Activated CD8-positive, alpha-beta T cell treated with anti-CD3 and anti-CD28 coated beads, Interleukin-2, amount 10 ng/mL, durations not matched to agents 7 days and 5 days (primary cell): ENCODE measurements at regions of chr6 and their contacts with region 1.

Region 1: GRCh38 chr6:42879372-42880239 is at the start of gene RPL7L1:
- DNase-seq: peak; percentile 90
- ATAC-seq: peak; percentile 96
- H3K4me3 Mint-ChIP-seq: peak within 1 kb of the TSS; percentile 100
- H3K27ac Mint-ChIP-seq: peak within 1 kb of the TSS; percentile 100
- H3K4me1 Mint-ChIP-seq: peaks cover 25% of the 10 kb centered on the region
- H3K27me3 Mint-ChIP-seq: no peaks in the 10 kb centered on the region
- total RNA-seq, gene RPL7L1: 74.1 to 77.9 TPM

Region 2: GRCh38 chr6:42661540-42662153 is 218.0 kb before region 1 on chr6:
- CTCF ChIA-PET with region 1: interaction called, 69 read pairs
- POLR2A ChIA-PET with region 1: interaction called, 7 read pairs
- DNase-seq: peak; percentile 90
- ATAC-seq: peak; percentile 84
- H3K4me3 Mint-ChIP-seq: no peak overlapping the region
- H3K27ac Mint-ChIP-seq: no peak overlapping the region
- H3K4me1 Mint-ChIP-seq: peaks cover 2% of the 10 kb centered on the region
- H3K27me3 Mint-ChIP-seq: no peaks in the 10 kb centered on the region

Region 3: DNA sequence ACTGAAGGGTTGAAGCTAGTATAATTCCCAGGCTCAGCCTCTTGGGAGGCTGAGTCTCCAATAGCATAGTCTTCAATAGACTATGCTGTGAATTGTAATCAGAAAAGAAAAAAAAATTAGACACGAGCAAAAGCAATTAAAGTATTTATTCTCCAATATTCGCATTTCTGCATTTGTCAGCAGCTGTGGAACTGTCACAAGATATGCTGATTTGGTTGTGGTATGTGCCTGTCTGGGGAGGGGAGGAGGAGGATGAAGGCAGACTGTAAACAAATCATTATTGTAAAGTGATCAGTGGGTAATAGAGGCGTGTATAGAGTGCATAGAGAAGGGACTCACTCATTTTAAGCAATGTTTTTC is 107.9 kb before region 1 on chr6:
- CTCF ChIA-PET with region 1: interaction called, 3 read pairs
- POLR2A ChIA-PET with region 1: interaction called, 14 read pairs
- DNase-seq: peak; percentile 33
- ATAC-seq: peak; percentile 27
- H3K4me3 Mint-ChIP-seq: peak overlapping the region; percentile 72
- H3K27ac Mint-ChIP-seq: peak overlapping the region; percentile 100
- H3K4me1 Mint-ChIP-seq: peaks cover 51% of the 10 kb centered on the region
- H3K27me3 Mint-ChIP-seq: no peaks in the 10 kb centered on the region

Region 4: GRCh38 chr6:42782622-42783176 is 96.9 kb before region 1 on chr6:
- CTCF ChIA-PET with region 1: interaction called, 4 read pairs
- POLR2A ChIA-PET with region 1: interaction called, 20 read pairs
- DNase-seq: peak; percentile 76
- ATAC-seq: peak; percentile 54
- H3K4me3 Mint-ChIP-seq: peak overlapping the region; percentile 95
- H3K27ac Mint-ChIP-seq: peak overlapping the region; percentile 99
- H3K4me1 Mint-ChIP-seq: peaks cover 25% of the 10 kb centered on the region
- H3K27me3 Mint-ChIP-seq: no peaks in the 10 kb centered on the region

Region 5: DNA sequence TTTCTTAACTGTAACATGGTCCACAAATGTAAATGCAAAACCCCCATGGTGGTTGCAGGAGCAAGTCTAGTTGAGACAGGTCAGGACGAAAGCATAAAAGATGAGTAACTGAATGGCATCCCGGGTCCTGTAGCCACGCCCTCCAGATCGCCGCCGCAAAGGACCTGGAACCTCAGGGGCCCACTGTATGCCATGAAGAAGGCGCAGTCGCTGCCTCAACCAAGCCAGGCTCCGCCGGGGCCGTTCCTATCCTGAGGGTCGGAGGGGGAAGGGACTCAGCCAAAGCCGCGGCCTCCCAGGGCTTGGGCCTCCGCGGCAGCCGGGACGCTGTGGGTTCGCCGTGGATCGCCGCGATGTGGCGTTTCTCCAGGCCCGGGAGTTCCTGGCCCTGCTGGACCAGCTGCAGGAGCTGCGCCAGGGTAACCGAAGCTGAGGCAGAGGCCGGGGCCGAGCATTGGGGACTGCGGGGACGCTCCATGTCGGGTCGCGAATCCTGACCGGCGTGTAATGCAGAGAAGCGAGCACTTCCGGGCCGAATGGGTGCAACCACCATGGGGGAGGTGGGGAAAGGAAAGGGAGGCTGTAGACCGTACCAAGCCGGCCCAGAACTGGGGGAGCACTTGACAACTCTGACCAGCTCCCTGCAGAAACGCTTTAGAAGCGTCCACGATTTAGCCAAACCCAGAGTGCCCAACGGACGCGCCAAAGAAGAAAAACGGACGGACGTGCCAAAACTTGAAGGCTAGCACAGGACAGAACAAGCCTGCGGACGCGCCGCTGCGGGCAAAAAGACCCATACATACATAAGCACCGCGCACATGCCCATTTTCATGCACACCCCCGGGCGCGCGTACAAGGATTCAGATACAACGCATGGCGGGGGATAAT is 10.9 kb after region 1 on chr6:
- CTCF ChIA-PET with region 1: interaction called, 8 read pairs
- POLR2A ChIA-PET with region 1: interaction called, 33 read pairs
- DNase-seq: peak; percentile 96
- ATAC-seq: peak; percentile 93
- H3K4me3 Mint-ChIP-seq: peak overlapping the region; percentile 94
- H3K27ac Mint-ChIP-seq: peak overlapping the region; percentile 98
- H3K4me1 Mint-ChIP-seq: peaks cover 27% of the 10 kb centered on the region
- H3K27me3 Mint-ChIP-seq: no peaks in the 10 kb centered on the region

Region 6: DNA sequence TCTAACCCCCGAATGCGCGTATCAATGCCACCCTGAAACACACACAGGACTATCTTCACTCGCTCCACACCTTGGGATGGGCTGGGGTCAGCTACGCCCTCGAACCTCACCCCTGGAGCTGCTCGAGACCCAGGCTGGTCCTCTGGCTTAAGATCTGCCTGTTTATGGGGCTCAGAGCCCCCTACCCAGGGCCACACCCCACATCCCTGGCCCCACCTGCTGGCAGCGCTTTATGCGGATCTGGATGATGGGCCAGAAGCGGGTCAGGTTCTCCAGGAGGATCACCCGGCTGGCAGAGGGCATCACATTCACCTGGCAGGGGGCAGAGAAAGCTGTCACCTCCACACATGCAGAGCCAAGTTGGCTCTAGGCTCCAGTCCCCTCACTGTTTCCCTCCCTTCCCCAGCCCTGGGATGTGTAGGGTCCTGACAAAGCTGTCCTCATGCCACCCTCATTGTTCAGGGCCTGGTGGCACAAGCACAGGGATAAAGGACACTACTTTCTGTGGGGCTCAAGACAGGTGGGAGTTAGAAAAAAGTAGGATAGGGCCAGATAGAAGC is 165.8 kb after region 1 on chr6:
- CTCF ChIA-PET with region 1: no interaction called
- POLR2A ChIA-PET with region 1: no interaction called
- DNase-seq: no peak
- ATAC-seq: no peak
- H3K4me3 Mint-ChIP-seq: no peak overlapping the region
- H3K27ac Mint-ChIP-seq: no peak overlapping the region
- H3K4me1 Mint-ChIP-seq: peaks cover 4% of the 10 kb centered on the region
- H3K27me3 Mint-ChIP-seq: no peaks in the 10 kb centered on the region